ENCODE measurements at regions of chr3 and their contacts with region 1.

Region 1: GRCh38 chr3:99895703-99896441 is 78.2 kb downstream of the CMSS1 start:
- DNase-seq: no peak
- CTCF ChIP-seq: no peak

Region 2: DNA sequence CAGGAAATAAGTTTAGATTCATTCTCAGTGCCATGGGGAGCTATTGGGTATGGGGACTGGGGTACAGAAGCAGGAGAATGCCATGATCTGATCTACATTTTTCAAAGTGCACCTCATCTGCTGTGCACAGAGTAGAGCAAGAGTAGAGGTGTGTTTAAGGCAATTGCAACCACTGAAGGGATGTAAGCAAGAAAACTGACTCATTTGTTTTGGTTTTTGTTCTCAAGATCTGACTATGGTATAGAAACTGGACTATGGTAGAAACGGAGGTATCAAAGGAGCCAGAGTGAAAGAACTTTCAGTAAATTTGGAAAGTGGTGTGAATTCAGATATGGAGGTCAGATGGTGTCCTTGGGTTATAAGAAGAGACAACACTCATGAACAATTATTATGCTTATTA is 164.4 kb before region 1 on chr3:
- CTCF ChIA-PET with region 1: no interaction called
- POLR2A ChIA-PET with region 1: no interaction called
- DNase-seq: no peak
- CTCF ChIP-seq: no peak

Region 3: GRCh38 chr3:99817437-99818240 is 78.2 kb before region 1 on chr3 and contains the start of gene CMSS1:
- CTCF ChIA-PET with region 1: no interaction called
- POLR2A ChIA-PET with region 1: no interaction called
- DNase-seq: peak; percentile 92
- CTCF ChIP-seq: no peak

Region 4: DNA sequence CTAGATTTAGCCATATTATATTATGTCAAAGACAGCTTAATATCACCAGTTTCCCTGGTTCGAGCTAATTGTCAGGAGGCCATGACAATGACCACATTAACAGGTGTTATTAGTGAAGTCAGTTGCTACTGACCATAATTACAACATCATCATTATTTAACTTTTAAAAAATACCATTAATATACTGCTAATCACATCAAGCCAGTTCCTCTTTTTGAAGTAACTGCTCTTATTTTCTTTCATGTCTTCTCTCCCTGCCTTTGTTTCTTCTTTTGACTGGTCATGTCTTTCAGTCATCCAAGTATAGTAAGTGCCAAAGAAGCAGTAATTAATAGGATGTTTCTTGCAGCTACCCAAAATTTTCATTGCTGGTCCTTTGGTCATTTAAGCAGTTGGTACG is 16.6 kb before region 1 on chr3:
- CTCF ChIA-PET with region 1: interaction called, 15 read pairs
- POLR2A ChIA-PET with region 1: no interaction called
- DNase-seq: no peak
- CTCF ChIP-seq: no peak

Region 5: GRCh38 chr3:99884484-99884883 is 11.4 kb before region 1 on chr3:
- CTCF ChIA-PET with region 1: interaction called, 15 read pairs
- POLR2A ChIA-PET with region 1: no interaction called
- DNase-seq: no peak
- CTCF ChIP-seq: no peak

Region 6: DNA sequence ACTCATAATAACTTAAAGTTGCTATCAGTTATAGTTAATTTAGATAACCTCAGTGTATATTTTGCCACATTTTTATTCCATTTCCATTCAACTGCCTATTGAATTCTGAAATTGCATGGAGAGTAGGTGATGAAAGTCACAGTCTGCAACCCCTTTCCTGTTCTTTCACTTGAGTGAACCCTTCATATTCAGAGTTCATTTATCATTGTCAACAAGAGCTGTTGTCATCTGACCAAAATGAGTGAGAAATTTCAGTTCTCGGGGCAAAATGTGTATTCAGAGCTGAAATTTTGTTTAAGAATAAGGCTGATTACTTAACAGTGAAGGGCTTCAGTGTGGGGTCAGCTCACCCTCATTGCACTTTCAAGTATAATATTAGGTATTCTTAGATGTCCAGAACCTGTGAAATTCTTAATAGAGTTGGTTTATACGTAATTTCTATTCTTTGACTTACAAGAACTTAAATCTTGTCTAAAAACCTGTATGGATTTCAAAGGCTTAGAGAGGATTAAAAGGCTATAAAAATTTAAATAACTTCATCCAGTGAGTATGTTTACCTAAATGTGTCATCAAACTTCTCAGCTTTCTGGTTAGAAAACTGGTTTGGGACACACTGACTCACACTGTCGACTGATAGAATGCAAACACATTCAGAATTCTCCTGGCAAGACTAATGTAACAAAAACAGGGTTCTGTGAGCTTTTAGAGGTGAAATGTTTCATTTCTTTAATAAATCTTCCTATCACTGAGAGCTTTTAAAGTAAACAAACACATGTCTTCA is 14.0 kb after region 1 on chr3:
- CTCF ChIA-PET with region 1: interaction called, 11 read pairs
- POLR2A ChIA-PET with region 1: no interaction called
- DNase-seq: no peak
- CTCF ChIP-seq: no peak

Measured in GM10248 (cell line).